Mammary epithelial cell (primary cell): ENCODE measurements at regions of chr1 and their contacts with region 1.

Region 1: GRCh38 chr1:153422450-153423068 is 6.2 kb downstream of the S100A7A start:
- DNase-seq: peak; percentile 49
- H3K4me3 ChIP-seq: no peak overlapping the region
- H3K27ac ChIP-seq: no peak overlapping the region
- H3K4me1 ChIP-seq: no peaks in the 10 kb centered on the region
- H3K27me3 ChIP-seq: no peaks in the 10 kb centered on the region
- CTCF ChIP-seq: no peak

Region 2: GRCh38 chr1:152718238-152718637 is 704.3 kb before region 1 on chr1:
- CTCF ChIA-PET with region 1: no interaction called
- dilution Hi-C with region 1: no loop called
- in situ Hi-C with region 1: no loop called
- intact Hi-C with region 1: no loop called
- DNase-seq: peak; percentile 92
- H3K4me3 ChIP-seq: no peak overlapping the region
- H3K27ac ChIP-seq: peak overlapping the region; percentile 43
- H3K4me1 ChIP-seq: peaks cover 17% of the 10 kb centered on the region
- H3K27me3 ChIP-seq: no peaks in the 10 kb centered on the region
- CTCF ChIP-seq: no peak

Region 3: GRCh38 chr1:153459655-153460054 is 37.1 kb after region 1 on chr1:
- CTCF ChIA-PET with region 1: no interaction called
- dilution Hi-C with region 1: no loop called
- in situ Hi-C with region 1: no loop called
- intact Hi-C with region 1: loop called (anchors 5 kb)
- DNase-seq: no peak
- H3K4me3 ChIP-seq: no peak overlapping the region
- H3K27ac ChIP-seq: no peak overlapping the region
- H3K4me1 ChIP-seq: no peaks in the 10 kb centered on the region
- H3K27me3 ChIP-seq: peaks cover 3% of the 10 kb centered on the region
- CTCF ChIP-seq: no peak